Lower leg skin (tissue), 4 donors: ENCODE measurements at regions of chr12 and their contacts with region 1.

Region 1: DNA sequence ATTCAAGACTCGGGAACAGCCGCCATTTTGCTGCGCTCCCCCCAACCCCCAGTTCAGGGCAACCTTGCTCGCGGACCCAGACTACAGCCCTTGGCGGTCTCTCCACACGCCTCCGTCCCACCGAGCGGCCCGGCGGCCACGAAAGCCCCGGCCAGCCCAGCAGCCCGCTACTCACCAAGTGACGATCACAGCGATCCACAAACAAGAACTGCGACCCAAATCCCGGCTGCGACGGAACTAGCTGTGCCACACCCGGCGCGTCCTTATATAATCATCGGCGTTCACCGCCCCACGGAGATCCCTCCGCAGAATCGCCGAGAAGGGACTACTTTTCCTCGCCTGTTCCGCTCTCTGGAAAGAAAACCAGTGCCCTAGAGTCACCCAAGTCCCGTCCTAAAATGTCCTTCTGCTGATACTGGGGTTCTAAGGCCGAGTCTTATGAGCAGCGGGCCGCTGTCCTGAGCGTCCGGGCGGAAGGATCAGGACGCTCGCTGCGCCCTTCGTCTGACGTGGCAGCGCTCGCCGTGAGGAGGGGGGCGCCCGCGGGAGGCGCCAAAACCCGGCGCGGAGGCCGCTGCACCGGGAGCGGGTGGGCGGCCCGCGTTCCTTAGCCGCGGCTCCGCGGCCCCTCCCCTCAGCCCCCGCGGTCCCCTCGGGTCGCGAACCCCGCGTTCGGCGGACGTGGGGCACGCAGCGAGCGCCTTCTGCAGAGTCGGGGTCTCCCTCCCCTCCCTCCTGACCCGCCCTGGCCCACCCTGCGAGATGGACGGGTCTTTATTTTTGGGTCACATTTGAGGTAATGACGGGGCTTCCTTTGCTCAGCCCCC is at the start of gene UBC:
- DNase-seq: peak; percentile 92 to 99
- H3K4me3 ChIP-seq: peak within 1 kb of the TSS; percentile 92
- CTCF ChIP-seq: peak in 1 of 3 donors; percentile 34
- POLR2A ChIP-seq: peak in 1 of 2 donors; percentile 100
- total RNA-seq, gene UBC: 1,350 to 1,636 (median 1,452) TPM

Region 2: DNA sequence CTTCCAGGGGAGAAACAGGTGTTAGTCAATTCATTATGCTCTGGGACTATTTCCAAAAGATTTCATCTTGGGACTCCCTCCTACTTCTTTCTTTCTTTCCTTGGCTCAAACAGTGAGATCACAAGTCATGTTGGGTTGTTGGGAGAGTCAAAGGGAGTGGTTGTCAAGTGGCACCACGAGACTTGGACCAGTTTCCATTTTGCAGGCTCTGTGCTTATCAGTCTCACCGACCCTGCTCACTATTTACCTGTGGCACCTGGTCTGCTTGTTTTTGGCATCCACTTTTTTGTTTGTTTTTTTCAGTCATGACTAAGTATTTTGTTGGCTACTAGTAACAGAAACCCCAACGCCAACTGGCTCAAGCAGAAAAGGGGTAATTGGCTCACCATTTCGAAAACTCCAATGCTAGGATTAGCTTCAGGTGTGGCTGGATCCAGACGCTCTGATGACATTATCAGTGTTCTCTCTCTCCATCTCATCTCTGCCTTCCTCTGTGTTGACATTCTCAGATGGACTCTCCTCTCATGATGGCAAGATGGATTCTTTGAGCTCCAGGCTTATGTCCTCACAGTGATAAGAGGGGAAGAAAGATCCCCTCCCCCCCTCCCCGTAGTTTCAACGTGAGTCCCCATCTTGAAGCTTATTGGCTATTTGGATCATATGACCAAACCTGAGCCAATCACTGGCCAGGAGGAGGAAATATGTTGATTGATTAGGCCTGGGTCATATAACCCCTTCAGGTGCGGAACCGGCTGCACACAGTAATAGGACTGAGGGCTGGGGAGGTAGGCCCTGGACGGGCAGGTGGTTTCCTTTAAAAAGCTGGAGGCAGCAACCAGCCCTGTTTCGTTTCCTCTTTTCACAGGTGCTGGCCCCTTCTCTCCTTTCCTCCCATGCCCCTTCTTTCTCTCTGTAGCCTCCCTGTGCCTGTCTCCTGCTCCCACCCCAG is 234.8 kb after region 1 on chr12:
- intact Hi-C with region 1: loop called (anchors 5 kb)
- DNase-seq: no peak
- H3K4me3 ChIP-seq: no peak overlapping the region
- CTCF ChIP-seq: no peak
- POLR2A ChIP-seq: no peak

Region 3: DNA sequence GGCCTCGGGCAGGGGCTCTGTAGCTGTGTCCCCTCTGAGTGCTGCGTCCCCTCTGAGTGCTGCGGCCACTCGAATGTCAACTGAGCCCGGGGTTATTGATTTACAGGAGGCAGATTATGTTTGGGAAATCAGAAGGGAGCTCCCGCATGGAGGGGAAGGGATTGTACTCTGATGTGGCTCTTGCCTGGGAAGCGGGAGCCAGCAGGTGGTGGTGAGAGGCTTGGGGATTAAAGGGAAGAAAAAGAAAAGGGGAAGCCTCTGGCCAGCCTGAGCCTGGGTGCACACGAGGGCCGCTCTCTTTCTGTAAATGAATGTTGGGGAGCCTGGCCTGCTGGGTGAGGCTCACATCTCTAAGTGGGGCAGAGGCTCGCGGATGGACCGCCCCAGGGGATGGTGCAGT is 294.3 kb after region 1 on chr12:
- intact Hi-C with region 1: no loop called
- DNase-seq: no peak
- H3K4me3 ChIP-seq: no peak overlapping the region
- CTCF ChIP-seq: no peak
- POLR2A ChIP-seq: no peak